Activated CD4-positive, alpha-beta T cell treated with anti-CD3 and anti-CD28 coated beads for 36 hours (primary cell): ENCODE measurements at regions of chr2 and their contacts with region 1.

Region 1: DNA sequence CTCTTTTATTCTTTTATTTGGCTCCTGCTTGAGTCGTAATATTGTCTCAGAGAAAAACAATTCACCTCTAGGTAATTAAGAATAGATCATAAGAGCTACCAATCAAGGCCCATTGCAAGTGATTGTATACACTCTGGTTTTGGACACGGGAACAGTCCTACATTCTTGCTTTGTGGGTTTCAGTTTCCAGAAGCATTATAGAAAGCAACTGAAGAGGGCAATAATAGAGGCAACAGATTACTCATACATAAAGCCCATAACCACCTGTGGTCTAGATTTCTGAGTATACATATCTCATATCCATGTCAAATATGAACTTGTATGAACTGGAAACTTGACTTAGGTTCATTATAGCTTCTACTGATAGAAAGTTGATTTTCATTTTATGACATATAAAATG is 65.4 kb downstream of the DIS3L2 start:
- DNase-seq: no peak
- ATAC-seq: peak; percentile 95
- H3K4me3 Mint-ChIP-seq: no peak overlapping the region
- H3K27ac Mint-ChIP-seq: peak overlapping the region; percentile 48
- H3K4me1 Mint-ChIP-seq: peaks cover 29% of the 10 kb centered on the region
- H3K27me3 Mint-ChIP-seq: no peaks in the 10 kb centered on the region

Region 2: DNA sequence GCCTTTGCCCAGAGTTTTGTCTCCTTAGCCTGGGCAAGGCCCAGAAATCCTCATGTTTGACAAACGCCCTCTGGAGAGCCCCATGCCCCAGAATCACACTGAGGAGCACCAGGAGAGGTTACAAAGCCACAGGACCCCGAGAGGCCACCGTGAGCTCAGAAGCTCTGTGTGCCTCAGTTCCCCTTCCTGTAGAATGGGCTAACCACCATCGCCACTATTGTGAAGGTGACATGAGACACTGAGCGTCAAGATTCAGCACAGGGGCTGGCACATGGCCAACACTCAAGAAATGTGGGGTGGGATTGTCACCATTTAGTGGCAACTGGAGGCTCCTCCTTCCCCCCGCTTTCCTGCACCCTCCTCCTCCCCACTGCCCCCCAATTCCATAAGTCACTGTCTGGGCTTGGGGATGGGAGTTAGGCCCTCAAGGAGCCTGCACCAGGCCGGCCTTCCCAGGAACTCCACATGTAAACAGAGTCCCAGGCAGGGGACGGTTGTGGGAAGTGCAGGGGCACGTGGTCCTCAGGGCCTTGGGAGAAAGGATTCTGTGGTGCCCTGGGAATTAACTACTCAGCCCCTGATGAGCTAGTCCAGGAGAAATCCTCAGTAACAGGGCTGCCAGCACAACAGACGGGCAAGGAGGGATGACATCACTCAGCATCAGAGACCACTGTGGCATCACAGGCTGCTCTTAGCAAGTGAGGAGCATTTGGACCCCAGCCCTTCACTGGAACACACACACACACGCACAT is 495.3 kb before region 1 on chr2:
- CTCF ChIA-PET with region 1: no interaction called
- POLR2A ChIA-PET with region 1: no interaction called
- intact Hi-C with region 1: no loop called
- DNase-seq: no peak
- ATAC-seq: no peak
- H3K4me3 Mint-ChIP-seq: no peak overlapping the region
- H3K27ac Mint-ChIP-seq: no peak overlapping the region
- H3K4me1 Mint-ChIP-seq: peaks cover 7% of the 10 kb centered on the region
- H3K27me3 Mint-ChIP-seq: peaks cover 24% of the 10 kb centered on the region

Region 3: GRCh38 chr2:232013701-232014353 is 13.1 kb before region 1 on chr2:
- CTCF ChIA-PET with region 1: interaction called, 12 read pairs
- POLR2A ChIA-PET with region 1: no interaction called
- intact Hi-C with region 1: no loop called
- DNase-seq: no peak
- ATAC-seq: peak; percentile 58
- H3K4me3 Mint-ChIP-seq: no peak overlapping the region
- H3K27ac Mint-ChIP-seq: no peak overlapping the region
- H3K4me1 Mint-ChIP-seq: peaks cover 18% of the 10 kb centered on the region
- H3K27me3 Mint-ChIP-seq: no peaks in the 10 kb centered on the region

Region 4: GRCh38 chr2:232058063-232058877 is 31.4 kb after region 1 on chr2:
- CTCF ChIA-PET with region 1: interaction called, 3 read pairs
- POLR2A ChIA-PET with region 1: no interaction called
- intact Hi-C with region 1: loop called (anchors 1 kb)
- DNase-seq: peak; percentile 13
- ATAC-seq: peak; percentile 88
- H3K4me3 Mint-ChIP-seq: no peak overlapping the region
- H3K27ac Mint-ChIP-seq: no peak overlapping the region
- H3K4me1 Mint-ChIP-seq: peaks cover 33% of the 10 kb centered on the region
- H3K27me3 Mint-ChIP-seq: no peaks in the 10 kb centered on the region